Endothelial cell of umbilical vein (primary cell): ENCODE measurements at regions of chr4 and their contacts with region 1.

Region 1: DNA sequence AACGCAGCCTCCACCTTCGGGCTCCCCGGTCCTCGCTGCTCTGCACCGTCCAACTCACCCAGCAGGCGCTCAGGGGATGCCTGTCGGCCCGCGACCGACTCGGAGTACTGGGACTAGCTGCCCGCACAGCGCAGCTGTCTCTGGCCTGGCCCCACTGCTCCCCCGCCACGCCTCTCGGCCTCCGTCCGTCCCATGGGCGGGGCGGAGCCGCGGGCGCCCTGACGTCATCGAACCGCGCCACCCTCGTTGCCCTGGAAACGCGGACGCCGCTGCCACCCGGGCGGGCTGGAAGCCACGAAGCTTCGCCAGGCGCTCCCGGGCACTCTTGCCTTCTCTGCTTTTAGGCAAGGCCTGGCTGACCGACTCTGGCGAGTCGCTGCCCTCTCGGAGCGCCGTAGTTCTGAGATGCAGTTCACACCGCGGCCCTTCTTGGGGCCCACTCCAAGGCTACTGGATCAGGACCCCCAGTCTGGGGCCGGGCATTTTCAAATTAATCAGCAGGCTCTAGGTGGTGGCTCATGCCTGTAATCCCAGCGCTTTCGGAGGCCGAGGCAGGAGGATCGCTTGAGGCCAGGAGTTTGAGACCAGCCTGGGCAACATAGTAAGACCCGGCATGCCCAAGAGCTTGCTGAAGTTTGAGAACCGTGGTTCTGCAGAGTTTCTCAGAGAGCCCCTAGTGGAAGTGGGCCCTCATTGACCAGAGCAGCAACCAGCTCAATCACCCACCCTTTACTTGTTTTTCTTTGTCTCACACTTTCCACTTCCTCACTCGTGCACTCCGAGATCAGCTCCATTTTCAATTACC is 12.0 kb downstream of the ACOX3 start:
- DNase-seq: peak; percentile 85
- H3K4me3 ChIP-seq: peak overlapping the region; percentile 35 to 80 (median 67)
- H3K27ac ChIP-seq: peak overlapping the region; percentile 78
- H3K4me1 ChIP-seq: peaks cover 13% of the 10 kb centered on the region
- H3K27me3 ChIP-seq: no peaks in the 10 kb centered on the region
- CTCF ChIP-seq: peak; percentile 40 to 77
- POLR2A ChIP-seq: peak; percentile 76

Region 2: DNA sequence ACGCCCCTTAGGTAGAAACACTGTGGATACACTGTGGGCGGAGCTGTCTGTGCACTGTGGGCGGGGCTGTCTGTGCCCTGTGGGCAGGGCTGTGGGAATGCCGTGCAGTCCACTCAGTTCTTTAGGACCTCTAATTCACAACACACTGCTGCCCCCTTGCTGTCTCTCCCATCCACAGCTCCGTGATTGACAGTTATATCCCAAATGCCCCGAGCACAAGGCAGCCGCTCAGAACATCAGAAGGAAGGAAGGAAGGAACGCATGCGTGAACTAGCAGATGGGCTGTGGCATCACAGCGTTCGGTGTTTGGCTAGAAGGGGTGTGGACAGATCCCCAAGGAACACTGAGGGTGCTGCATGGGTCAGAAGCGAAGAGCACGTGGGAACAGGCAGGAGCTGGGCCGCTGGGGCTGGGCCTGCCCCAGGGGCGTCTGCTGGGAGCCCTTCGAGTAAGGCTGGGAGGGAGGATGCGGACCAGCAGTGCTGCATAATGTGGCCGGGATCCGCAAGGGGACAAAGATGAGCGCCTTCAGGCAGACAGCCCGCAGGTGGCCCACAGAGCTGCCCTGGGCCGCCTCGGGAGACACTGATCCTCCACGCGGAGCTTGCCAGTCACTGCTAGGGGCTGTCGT is 17.7 kb before region 1 on chr4:
- CTCF ChIA-PET with region 1: interaction called, 14 read pairs
- POLR2A ChIA-PET with region 1: interaction called, 5 read pairs
- dilution Hi-C with region 1: no loop called
- intact Hi-C with region 1: loop called (anchors 2 kb)
- DNase-seq: peak; percentile 94
- H3K4me3 ChIP-seq: no peak overlapping the region
- H3K27ac ChIP-seq: no peak overlapping the region
- H3K4me1 ChIP-seq: no peaks in the 10 kb centered on the region
- H3K27me3 ChIP-seq: no peaks in the 10 kb centered on the region
- CTCF ChIP-seq: peak; percentile 63 to 72
- POLR2A ChIP-seq: no peak

Region 3: GRCh38 chr4:8440492-8441341 is 12.2 kb after region 1 on chr4 and contains the starts of genes ACOX3 and TRMT44:
- CTCF ChIA-PET with region 1: interaction called, 19 read pairs
- POLR2A ChIA-PET with region 1: interaction called, 5 read pairs
- dilution Hi-C with region 1: no loop called
- intact Hi-C with region 1: loop called (anchors 1 kb)
- DNase-seq: peak; percentile 96
- H3K4me3 ChIP-seq: peak within 1 kb of the TSS; percentile 71 to 97 (median 72)
- H3K27ac ChIP-seq: peak within 1 kb of the TSS; percentile 91
- H3K4me1 ChIP-seq: peaks cover 44% of the 10 kb centered on the region
- H3K27me3 ChIP-seq: no peaks in the 10 kb centered on the region
- CTCF ChIP-seq: no peak
- POLR2A ChIP-seq: peak; percentile 77
- total RNA-seq, gene ACOX3: 25.6 and 26.3 TPM in 2 replicates
- total RNA-seq, gene TRMT44: 17.3 and 20.7 TPM in 2 replicates

Region 4: GRCh38 chr4:8459867-8460447 is 31.5 kb after region 1 on chr4:
- CTCF ChIA-PET with region 1: no interaction called
- POLR2A ChIA-PET with region 1: no interaction called
- dilution Hi-C with region 1: no loop called
- intact Hi-C with region 1: no loop called
- DNase-seq: no peak
- H3K4me3 ChIP-seq: no peak overlapping the region
- H3K27ac ChIP-seq: no peak overlapping the region
- H3K4me1 ChIP-seq: no peaks in the 10 kb centered on the region
- H3K27me3 ChIP-seq: no peaks in the 10 kb centered on the region
- CTCF ChIP-seq: no peak
- POLR2A ChIP-seq: no peak